Aorta (tissue), 5 donors: ENCODE measurements at regions of chr6 and their contacts with region 1.

Region 1: DNA sequence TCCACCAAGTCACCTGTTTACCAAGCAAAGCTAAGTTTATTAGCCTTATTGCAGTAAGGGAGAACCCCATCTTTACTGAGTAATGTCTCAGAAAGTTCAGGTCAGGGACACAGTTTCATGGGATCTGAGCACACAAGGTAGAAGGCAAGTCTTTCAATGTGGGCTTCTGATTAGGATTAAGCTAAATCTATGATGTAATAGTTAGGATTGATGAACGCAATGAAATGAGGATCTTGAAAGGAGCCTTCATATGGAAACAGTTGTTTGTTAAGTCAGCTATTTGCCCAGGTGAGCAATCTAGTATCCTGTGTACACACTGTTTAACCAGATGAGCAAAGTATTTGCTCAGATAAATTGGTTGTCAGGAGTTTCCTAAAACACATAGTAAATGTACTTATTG is 237.0 kb upstream of the NRSN1 start:
- DNase-seq: no peak
- ATAC-seq: no peak
- H3K4me3 ChIP-seq: no peak overlapping the region
- H3K27ac ChIP-seq: no peak overlapping the region
- H3K4me1 ChIP-seq: no peaks in the 10 kb centered on the region
- H3K27me3 ChIP-seq: no peaks in the 10 kb centered on the region

Region 2: DNA sequence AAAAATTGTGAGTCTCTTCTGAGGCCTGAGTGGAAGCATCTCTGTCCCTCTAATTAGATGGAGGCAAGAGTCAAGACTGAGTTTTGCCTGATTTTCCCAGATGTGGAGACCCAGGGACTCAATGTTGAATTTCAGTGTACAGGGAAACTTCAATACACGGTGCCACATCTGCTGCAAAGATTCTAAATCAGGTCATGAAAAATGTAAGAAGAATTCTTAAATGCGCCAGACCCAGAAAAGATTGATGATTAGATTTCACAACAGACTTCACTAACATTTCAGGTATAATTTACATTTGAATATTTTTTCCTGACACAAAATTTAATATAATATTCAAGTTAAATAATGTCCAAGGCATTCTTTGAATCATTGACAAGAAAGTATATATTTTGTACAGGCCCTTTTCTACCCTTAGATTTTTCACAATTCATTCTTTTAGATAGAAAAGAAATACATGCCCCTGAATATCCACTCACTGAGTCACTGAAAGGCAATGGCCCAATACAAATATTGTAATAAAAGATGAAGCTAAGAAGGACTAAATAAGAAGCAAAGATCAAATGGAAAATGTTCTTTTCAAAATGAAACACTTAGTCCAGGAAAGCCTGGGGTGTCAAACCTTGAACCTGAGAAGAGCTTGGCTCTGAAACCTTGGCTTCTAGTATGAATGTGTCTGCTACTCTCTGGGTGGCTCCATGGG is 1337.9 kb before region 1 on chr6:
- intact Hi-C with region 1: loop called in 1 of 2 experiments (anchors 5 kb)
- DNase-seq: no peak
- ATAC-seq: no peak
- H3K4me3 ChIP-seq: no peak overlapping the region
- H3K27ac ChIP-seq: no peak overlapping the region
- H3K4me1 ChIP-seq: peaks cover 2 to 3% of the 10 kb centered on the region in 2 donors
- H3K27me3 ChIP-seq: no peaks in the 10 kb centered on the region